Activated CD8-positive, alpha-beta T cell treated with anti-CD3 and anti-CD28 coated beads for 36 hours (primary cell): ENCODE measurements at regions of chr6 and their contacts with region 1.

Region 1: GRCh38 chr6:36885461-36886401 is at the start of gene C6orf89:
- DNase-seq: peak; percentile 99
- ATAC-seq: peak; percentile 99
- H3K4me3 Mint-ChIP-seq: peak within 1 kb of the TSS; percentile 94
- H3K27ac Mint-ChIP-seq: peak within 1 kb of the TSS; percentile 96
- H3K4me1 Mint-ChIP-seq: peaks cover 35% of the 10 kb centered on the region
- H3K27me3 Mint-ChIP-seq: no peaks in the 10 kb centered on the region
- CTCF ChIP-seq: peak; percentile 79
- total RNA-seq, gene C6orf89: 24.7 to 29.8 TPM

Region 2: DNA sequence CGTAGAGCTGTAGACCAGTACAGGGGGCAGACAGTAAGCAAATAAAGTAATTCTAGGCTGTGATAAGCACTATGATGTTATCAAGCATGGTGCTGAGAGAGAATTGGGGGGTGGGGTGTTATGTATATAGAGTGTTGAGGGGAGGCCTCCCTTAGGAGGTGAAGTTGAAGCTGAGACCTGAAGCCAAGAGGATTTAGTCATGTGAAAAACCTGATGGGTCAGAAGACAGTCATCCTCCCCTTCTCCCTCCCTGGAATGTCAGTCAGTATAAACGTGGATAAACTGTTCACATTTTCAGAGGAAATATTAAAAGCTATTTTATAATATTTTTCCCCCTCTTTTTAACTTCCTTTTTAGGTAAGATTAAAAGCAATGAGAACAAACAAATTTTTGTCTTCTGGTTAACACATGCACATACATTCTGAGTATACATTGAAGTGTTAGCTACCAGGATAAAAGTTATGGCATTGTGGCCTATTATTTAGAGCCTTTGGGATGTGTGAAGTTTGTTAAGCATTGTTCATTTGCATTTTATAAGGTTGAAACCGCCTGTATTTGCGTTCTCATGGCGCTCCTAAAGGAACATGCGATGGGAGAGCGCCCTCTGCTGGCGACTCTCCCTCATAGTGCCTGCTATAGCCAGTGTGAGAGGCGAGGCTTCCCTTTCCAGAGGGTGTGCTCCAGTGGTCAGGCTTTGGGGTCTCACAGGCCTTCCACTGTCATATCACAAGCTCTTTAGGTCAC is 790.8 kb before region 1 on chr6:
- CTCF ChIA-PET with region 1: no interaction called
- POLR2A ChIA-PET with region 1: no interaction called
- intact Hi-C with region 1: no loop called
- DNase-seq: peak; percentile 90
- ATAC-seq: peak; percentile 82
- H3K4me3 Mint-ChIP-seq: no peak overlapping the region
- H3K27ac Mint-ChIP-seq: peak overlapping the region; percentile 67
- H3K4me1 Mint-ChIP-seq: peaks cover 32% of the 10 kb centered on the region
- H3K27me3 Mint-ChIP-seq: no peaks in the 10 kb centered on the region
- CTCF ChIP-seq: peak; percentile 96

Region 3: DNA sequence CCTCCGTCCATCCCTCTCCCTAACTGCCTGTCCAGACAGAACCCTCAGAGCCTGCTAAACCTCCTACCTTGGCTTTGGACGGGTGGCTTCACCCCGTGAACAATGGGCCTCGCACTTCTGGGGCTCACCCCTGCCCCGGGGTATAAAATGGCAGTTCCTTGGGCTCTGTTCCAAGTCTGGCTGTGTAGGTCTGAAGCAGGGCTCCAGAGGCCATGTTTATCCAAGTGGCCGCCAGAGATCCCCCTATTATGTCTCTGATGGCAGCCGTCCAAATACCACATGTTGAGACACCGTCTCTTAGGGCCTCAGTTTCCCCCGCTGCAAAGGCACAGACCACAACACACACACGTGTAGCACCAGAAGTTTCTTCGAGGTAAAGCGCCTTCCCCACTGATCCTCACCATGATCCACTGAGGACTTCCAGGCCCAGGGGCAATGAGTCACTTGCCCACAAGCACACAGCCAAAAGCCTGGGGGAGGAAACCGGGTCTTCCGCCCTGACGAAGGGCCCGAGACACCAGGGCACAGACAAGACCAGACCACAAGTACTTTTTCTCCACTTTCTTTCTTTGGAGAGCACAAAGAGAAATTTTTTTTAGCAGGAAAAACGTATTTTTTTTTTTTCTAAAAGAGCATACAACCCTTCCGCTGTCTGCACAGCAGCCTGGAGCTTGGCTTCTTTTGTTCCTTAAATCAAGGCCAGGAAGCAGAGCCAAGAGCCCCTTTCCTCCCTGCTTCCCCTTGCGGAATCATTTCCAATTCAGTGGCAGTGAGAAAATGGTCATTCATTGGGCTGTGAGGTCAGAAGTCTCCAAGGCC is 58.3 kb before region 1 on chr6:
- CTCF ChIA-PET with region 1: no interaction called
- POLR2A ChIA-PET with region 1: no interaction called
- intact Hi-C with region 1: no loop called
- DNase-seq: peak; percentile 52
- ATAC-seq: peak; percentile 78
- H3K4me3 Mint-ChIP-seq: no peak overlapping the region
- H3K27ac Mint-ChIP-seq: no peak overlapping the region
- H3K4me1 Mint-ChIP-seq: peaks cover 4% of the 10 kb centered on the region
- H3K27me3 Mint-ChIP-seq: peaks cover 3% of the 10 kb centered on the region
- CTCF ChIP-seq: no peak

Region 4: GRCh38 chr6:36874443-36875249 is 11.1 kb before region 1 on chr6 and contains the start of gene PPIL1:
- CTCF ChIA-PET with region 1: interaction called, 99 read pairs
- POLR2A ChIA-PET with region 1: interaction called, 25 read pairs
- intact Hi-C with region 1: no loop called
- DNase-seq: peak; percentile 88
- ATAC-seq: peak; percentile 91
- H3K4me3 Mint-ChIP-seq: peak within 1 kb of the TSS; percentile 99
- H3K27ac Mint-ChIP-seq: peak within 1 kb of the TSS; percentile 100
- H3K4me1 Mint-ChIP-seq: peaks cover 42% of the 10 kb centered on the region
- H3K27me3 Mint-ChIP-seq: peaks cover 5% of the 10 kb centered on the region
- CTCF ChIP-seq: no peak
- total RNA-seq, gene PPIL1: 34.5 to 35.6 TPM

Region 5: GRCh38 chr6:36912586-36912985 is 26.9 kb after region 1 on chr6:
- CTCF ChIA-PET with region 1: interaction called, 19 read pairs
- POLR2A ChIA-PET with region 1: interaction called, 4 read pairs
- intact Hi-C with region 1: loop called (anchors 2 kb)
- DNase-seq: peak; percentile 81
- ATAC-seq: peak; percentile 88
- H3K4me3 Mint-ChIP-seq: peak overlapping the region; percentile 41
- H3K27ac Mint-ChIP-seq: peak overlapping the region; percentile 84
- H3K4me1 Mint-ChIP-seq: peaks cover 45% of the 10 kb centered on the region
- H3K27me3 Mint-ChIP-seq: no peaks in the 10 kb centered on the region
- CTCF ChIP-seq: no peak

Region 6: GRCh38 chr6:36955671-36956445 is 70.1 kb after region 1 on chr6:
- CTCF ChIA-PET with region 1: interaction called, 15 read pairs
- POLR2A ChIA-PET with region 1: interaction called, 3 read pairs
- intact Hi-C with region 1: no loop called
- DNase-seq: no peak
- ATAC-seq: peak; percentile 47
- H3K4me3 Mint-ChIP-seq: no peak overlapping the region
- H3K27ac Mint-ChIP-seq: no peak overlapping the region
- H3K4me1 Mint-ChIP-seq: peaks cover 29% of the 10 kb centered on the region
- H3K27me3 Mint-ChIP-seq: no peaks in the 10 kb centered on the region
- CTCF ChIP-seq: no peak

Region 7: DNA sequence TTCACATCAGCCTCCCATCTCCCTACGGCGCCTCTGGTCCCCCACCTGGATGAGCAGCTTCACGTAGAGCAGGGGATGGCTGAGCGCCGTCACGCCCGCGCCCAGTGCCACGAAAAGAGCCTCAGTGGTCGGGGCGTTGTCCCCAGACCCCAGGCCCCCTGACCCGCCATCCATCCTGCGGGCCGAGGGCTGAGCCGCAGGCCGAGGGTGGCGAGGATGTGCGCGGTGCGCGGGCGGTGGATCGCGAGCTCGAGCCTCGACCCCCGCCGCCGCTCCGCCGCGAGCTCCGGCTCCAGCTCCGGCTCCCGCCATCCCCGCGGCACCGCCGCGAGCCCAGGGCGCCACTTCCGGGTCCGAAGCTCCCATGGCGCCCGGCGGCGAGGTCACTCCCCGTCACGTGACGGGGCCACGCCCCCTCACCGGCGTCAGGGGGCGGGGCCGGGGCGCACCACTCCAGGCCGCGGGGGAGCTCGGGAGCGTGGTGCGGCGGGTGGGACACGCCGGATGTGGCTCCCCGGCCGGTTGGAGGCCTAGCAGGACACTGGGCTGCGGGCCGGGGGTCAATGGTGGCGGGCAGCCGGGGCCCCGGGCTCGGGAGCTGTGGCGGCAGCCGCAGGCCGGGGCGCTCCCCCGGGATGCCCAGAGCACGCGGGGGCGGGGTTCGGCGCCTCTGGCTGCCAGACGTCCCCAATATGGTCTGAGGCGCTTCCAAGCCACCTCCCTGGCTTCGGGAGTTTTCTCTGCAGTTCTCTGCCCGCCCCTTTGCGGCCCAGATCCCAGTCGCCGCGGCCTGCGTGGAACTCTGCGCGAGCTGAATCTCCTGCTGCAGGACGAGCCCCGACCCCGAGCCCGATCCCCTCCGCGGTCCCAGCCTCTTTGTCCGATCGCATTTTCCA is 100.3 kb after region 1 on chr6 and contains the start of gene MTCH1:
- CTCF ChIA-PET with region 1: interaction called, 9 read pairs
- POLR2A ChIA-PET with region 1: interaction called, 8 read pairs
- intact Hi-C with region 1: loop called (anchors 10 kb)
- DNase-seq: peak; percentile 85
- ATAC-seq: peak; percentile 82
- H3K4me3 Mint-ChIP-seq: peak within 1 kb of the TSS; percentile 99
- H3K27ac Mint-ChIP-seq: peak within 1 kb of the TSS; percentile 95
- H3K4me1 Mint-ChIP-seq: peaks cover 17% of the 10 kb centered on the region
- H3K27me3 Mint-ChIP-seq: peaks cover 1% of the 10 kb centered on the region
- CTCF ChIP-seq: no peak
- total RNA-seq, gene MTCH1: 96.5 to 100 TPM